ENCODE measurements at regions of chr1 and their contacts with region 1.

Region 1: GRCh38 chr1:6770751-6771440 is 14.4 kb upstream of the CAMTA1 start:
- DNase-seq: no peak

Region 2: DNA sequence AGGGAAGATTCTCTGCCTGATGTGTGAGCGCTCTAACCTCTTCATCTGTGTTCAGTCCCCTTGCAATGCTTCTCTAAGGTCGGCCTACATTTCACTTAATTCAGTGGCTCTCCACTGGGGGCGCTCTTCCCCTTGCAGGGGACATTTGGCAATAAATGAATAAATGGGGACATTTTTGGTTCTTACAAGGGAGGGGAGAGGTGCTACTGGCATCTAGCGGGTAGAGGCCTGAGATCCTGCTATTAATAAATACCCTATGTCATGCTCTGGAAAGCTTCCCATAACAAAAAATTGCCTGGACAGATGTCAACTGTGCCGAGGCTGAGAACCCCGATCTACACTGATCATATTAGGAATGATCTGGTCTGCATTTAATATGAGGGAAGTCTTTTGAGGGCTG is 43.4 kb before region 1 on chr1:
- intact Hi-C with region 1: loop called (anchors 10 kb)
- DNase-seq: peak in 4 of 10 donors; percentile 29 to 85 (median 42)

Region 3: GRCh38 chr1:6935361-6935883 is 164.5 kb after region 1 on chr1:
- intact Hi-C with region 1: no loop called
- DNase-seq: no peak